MCF 10A (cell line): ENCODE measurements at regions of chr14 and their contacts with region 1.

Region 1: DNA sequence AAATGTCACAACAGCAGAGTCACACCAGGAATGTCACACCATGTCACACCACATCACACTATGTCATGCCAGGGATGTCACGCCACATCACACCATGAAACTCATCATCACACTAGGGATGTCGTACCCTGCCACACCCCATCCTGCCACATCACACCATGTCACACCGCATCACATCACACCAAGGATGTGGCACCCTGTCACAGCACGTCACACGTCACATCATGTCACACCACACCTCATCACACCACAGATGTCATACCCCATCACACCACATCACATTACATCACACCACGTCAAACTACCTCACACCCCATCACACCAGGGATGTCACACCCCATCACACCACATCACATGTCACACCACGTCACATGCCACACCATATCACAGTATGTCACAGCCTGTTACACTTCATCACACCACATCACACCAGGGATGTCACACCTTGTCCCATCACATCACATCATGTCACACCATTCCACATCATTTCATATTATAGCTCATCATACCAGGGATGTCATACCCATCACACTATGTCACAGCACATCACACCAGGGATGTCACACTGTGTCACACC is 90.9 kb downstream of the TMEM121 start:
- DNase-seq: no peak
- H3K4me3 Mint-ChIP-seq: no peak overlapping the region
- H3K27ac Mint-ChIP-seq: no peak overlapping the region
- H3K4me1 Mint-ChIP-seq: no peaks in the 10 kb centered on the region
- H3K27me3 Mint-ChIP-seq: peaks cover 28% of the 10 kb centered on the region
- CTCF ChIP-seq: no peak

Region 2: GRCh38 chr14:105760691-105761346 is 143.5 kb after region 1 on chr14:
- CTCF ChIA-PET with region 1: no interaction called
- POLR2A ChIA-PET with region 1: no interaction called
- intact Hi-C with region 1: loop called (anchors 10 kb)
- DNase-seq: no peak
- H3K4me3 Mint-ChIP-seq: no peak overlapping the region
- H3K27ac Mint-ChIP-seq: no peak overlapping the region
- H3K4me1 Mint-ChIP-seq: no peaks in the 10 kb centered on the region
- H3K27me3 Mint-ChIP-seq: no peaks in the 10 kb centered on the region
- CTCF ChIP-seq: no peak